Naive thymus-derived CD4-positive, alpha-beta T cell (primary cell): ENCODE measurements at regions of chr5 and their contacts with region 1.

Region 1: GRCh38 chr5:32174011-32174870 is at the start of gene GOLPH3:
- DNase-seq: peak; percentile 87 to 96 (median 92)
- ATAC-seq: peak; percentile 94
- H3K4me3 ChIP-seq: peak within 1 kb of the TSS; percentile 87
- H3K4me3 Mint-ChIP-seq: peak within 1 kb of the TSS; percentile 85 to 100 (median 98)
- H3K27ac ChIP-seq: peak within 1 kb of the TSS; percentile 100
- H3K27ac Mint-ChIP-seq: peak within 1 kb of the TSS; percentile 94 to 99 (median 99)
- H3K4me1 ChIP-seq: peaks cover 5 to 8% of the 10 kb centered on the region in 2 donors
- H3K4me1 Mint-ChIP-seq: peaks cover 21 to 46% (median 34%) of the 10 kb centered on the region in 7 donors
- H3K27me3 ChIP-seq: no peaks in the 10 kb centered on the region
- H3K27me3 Mint-ChIP-seq: peaks cover 0 to 6% (median 3%) of the 10 kb centered on the region in 5 donors
- total RNA-seq, gene GOLPH3: 46.9 to 66.5 (median 60.1) TPM

Region 2: DNA sequence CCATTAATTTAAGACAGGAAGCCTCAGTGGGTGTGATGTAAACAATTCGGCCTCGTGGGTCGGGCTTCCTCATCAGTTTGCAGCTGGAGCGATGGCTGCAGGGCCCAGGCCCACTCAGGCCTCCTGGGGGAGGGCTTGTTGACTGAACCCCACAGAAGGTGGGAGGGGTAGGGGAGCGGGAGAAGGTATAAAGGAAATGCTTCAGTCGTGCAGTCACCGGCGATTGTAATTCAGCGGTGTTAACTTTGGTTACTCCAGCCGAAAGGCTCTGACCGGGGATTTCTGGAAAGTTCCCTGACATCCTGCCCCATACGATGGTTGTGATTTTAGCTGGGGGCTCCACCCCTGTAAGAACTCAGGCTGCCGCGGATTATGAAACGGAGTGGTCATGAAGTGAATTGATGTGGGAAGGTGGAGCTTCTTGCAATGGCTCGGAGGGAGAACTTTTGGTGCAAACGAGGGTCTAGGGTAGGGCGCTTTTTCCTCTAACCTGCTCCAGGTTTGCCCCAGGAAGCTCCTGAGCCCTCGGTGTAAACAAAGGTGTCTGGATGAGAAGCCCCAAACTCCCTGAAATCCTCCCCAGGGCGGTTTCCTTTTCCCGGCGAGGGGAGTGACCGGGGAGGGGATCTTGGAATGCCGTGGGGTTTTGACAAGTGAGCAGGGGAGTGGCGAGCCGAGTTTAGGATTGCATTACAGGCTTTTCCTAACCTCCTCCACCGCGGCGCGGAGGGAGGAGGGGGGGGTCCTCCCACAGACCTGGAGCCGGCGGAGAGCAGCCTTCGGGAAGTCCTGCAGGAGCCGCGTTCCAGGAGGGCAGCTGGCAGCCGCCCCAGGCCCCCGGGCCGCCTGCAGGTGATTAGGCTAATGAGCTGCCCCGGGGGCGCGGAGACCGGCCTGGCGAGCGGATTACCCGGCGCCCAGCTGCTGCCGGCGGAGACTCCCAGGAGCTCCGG is 319.8 kb before region 1 on chr5:
- CTCF ChIA-PET with region 1: no interaction called
- POLR2A ChIA-PET with region 1: no interaction called
- intact Hi-C with region 1: loop called in 1 of 2 experiments (anchors 10 kb)
- DNase-seq: peak in 4 of 9 donors; percentile 10 to 26 (median 24)
- ATAC-seq: peak; percentile 43
- H3K4me3 ChIP-seq: peak overlapping the region; percentile 63
- H3K4me3 Mint-ChIP-seq: peak overlapping the region; percentile 76 to 97 (median 88)
- H3K27ac ChIP-seq: peak overlapping the region; percentile 66
- H3K27ac Mint-ChIP-seq: peak overlapping the region in 8 of 9 donors; percentile 81 to 93 (median 85)
- H3K4me1 ChIP-seq: no peaks in the 10 kb centered on the region
- H3K4me1 Mint-ChIP-seq: peaks cover 9 to 44% (median 28%) of the 10 kb centered on the region in 7 donors
- H3K27me3 ChIP-seq: no peaks in the 10 kb centered on the region
- H3K27me3 Mint-ChIP-seq: peaks cover 0 to 45% (median 22%) of the 10 kb centered on the region in 5 donors

Region 3: DNA sequence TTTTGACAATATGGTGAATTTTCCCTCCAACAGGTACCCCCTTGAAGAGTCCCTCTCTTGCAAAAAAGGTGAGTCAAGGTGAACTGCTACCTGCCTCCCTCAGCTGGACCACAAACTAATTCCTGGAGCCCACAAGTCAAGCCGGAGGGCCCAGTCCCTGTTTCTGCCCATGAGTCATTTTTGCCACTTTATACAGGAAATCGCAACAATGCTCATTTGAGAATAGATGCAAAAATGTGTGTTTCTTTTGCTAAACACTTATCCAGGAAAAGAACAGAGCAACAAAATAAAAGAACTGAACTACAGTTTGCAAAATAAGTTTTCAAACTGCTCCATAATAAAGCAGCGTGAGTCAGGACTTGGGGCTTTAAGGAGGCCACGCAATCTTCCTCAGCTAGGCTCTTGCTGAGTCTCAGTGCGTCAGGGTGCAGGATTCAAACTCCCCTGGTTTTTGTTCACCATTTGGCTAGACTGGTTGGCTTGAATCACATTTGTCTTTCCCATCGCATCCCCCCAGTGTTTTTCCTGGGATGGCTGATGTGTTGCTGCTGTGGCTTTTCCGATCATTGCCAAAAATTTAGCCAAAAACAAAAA is 102.8 kb before region 1 on chr5:
- CTCF ChIA-PET with region 1: no interaction called
- POLR2A ChIA-PET with region 1: no interaction called
- intact Hi-C with region 1: no loop called
- DNase-seq: no peak
- ATAC-seq: no peak
- H3K4me3 ChIP-seq: no peak overlapping the region
- H3K4me3 Mint-ChIP-seq: no peak overlapping the region
- H3K27ac ChIP-seq: no peak overlapping the region
- H3K27ac Mint-ChIP-seq: peak overlapping the region in 1 of 9 donors; percentile 20
- H3K4me1 ChIP-seq: no peaks in the 10 kb centered on the region
- H3K4me1 Mint-ChIP-seq: peaks cover 0 to under 1% (median 0%) of the 10 kb centered on the region in 7 donors
- H3K27me3 ChIP-seq: no peaks in the 10 kb centered on the region
- H3K27me3 Mint-ChIP-seq: no peaks in the 10 kb centered on the region

Region 4: DNA sequence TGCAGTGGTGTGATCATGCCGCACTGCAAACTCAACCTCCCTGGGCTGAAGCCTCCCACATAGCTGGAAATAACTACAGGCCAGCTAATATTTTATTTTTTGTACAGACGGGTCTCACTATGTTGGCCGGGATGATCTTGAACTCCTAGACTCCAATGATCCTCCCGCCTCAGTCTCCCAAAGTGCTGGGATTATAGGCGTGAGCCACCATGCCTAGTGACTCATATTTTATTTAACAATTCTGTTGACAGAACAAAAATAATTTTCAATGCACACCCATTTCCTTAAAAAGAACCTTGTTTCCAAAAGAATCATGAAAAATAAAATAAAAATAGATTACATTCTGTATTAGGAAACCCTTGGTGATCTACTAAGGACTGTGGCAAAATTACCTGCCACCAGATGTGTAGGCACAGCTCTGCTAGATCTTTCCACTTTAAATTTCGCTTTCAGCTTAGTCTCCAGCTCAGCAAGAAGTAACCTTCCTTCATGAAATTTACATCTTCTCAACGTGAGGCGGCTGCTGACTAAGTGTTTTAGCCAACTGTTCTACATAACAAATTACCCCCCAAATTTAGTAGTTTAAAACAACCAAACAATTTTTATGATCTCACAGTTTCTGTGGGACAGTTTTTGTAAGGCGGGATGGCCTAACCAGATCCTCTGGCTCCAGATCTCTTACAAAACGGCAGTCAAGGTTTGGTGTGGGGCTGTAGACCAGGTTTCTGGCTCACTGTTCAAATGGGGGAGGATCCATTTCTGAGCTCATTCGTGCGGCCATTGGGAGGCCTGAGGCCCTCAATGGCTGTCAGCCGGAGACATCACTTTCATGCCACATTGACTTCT is 32.5 kb after region 1 on chr5:
- CTCF ChIA-PET with region 1: no interaction called
- POLR2A ChIA-PET with region 1: no interaction called
- intact Hi-C with region 1: loop called (anchors 1 kb)
- DNase-seq: no peak
- ATAC-seq: no peak
- H3K4me3 ChIP-seq: no peak overlapping the region
- H3K4me3 Mint-ChIP-seq: no peak overlapping the region
- H3K27ac ChIP-seq: no peak overlapping the region
- H3K27ac Mint-ChIP-seq: peak overlapping the region in 1 of 9 donors; percentile 8
- H3K4me1 ChIP-seq: peaks cover 0 to 4% of the 10 kb centered on the region in 2 donors
- H3K4me1 Mint-ChIP-seq: peaks cover 6 to 19% (median 8%) of the 10 kb centered on the region in 7 donors
- H3K27me3 ChIP-seq: no peaks in the 10 kb centered on the region
- H3K27me3 Mint-ChIP-seq: peaks cover 0 to 8% (median 0%) of the 10 kb centered on the region in 5 donors

Region 5: DNA sequence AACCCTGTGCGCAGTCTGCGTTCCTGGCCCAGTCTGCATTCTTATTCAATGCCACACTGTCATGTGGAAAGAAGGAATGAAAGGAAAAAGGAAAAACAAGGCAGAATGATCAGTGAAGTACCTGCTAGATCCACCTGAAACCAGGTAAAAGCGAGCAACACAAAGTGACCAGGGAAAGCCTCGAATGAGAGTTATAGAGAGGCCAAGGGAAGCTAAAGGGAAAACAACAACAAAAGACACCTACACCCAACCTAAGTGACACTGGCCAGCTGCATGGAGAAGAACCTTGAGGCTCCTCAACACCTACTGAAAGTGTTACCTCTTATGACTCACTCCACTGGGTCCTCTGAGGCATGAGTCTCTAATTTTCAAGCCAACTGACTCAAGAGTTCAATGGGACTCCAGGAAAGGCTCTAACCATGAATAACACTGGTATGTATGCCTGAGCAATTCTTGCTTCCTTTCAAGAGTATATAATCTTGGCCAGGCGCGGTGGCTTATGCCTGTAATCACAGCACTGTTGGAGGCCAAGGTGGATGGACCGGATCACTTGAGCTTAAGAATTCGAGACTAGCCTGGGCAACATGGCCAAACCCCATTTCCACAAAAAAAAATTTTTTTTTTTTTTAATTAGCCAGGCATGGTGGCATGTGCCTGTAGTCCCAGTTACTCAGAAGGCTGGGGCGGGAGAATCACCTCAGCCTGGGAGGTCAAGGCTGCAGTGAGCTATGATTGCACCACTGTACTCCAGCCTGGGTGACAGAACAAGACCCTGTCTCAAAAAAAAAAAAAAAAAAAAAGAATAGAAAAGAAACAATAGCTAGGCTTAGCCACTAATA is 109.5 kb after region 1 on chr5:
- CTCF ChIA-PET with region 1: no interaction called
- POLR2A ChIA-PET with region 1: no interaction called
- intact Hi-C with region 1: loop called in 1 of 2 experiments (anchors 2 kb)
- DNase-seq: no peak
- ATAC-seq: peak; percentile 68
- H3K4me3 ChIP-seq: no peak overlapping the region
- H3K4me3 Mint-ChIP-seq: no peak overlapping the region
- H3K27ac ChIP-seq: no peak overlapping the region
- H3K27ac Mint-ChIP-seq: peak overlapping the region in 5 of 9 donors; percentile 7 to 55 (median 14)
- H3K4me1 ChIP-seq: peaks cover 0 to 12% of the 10 kb centered on the region in 2 donors
- H3K4me1 Mint-ChIP-seq: peaks cover 10 to 67% (median 63%) of the 10 kb centered on the region in 7 donors
- H3K27me3 ChIP-seq: no peaks in the 10 kb centered on the region
- H3K27me3 Mint-ChIP-seq: no peaks in the 10 kb centered on the region

Region 6: DNA sequence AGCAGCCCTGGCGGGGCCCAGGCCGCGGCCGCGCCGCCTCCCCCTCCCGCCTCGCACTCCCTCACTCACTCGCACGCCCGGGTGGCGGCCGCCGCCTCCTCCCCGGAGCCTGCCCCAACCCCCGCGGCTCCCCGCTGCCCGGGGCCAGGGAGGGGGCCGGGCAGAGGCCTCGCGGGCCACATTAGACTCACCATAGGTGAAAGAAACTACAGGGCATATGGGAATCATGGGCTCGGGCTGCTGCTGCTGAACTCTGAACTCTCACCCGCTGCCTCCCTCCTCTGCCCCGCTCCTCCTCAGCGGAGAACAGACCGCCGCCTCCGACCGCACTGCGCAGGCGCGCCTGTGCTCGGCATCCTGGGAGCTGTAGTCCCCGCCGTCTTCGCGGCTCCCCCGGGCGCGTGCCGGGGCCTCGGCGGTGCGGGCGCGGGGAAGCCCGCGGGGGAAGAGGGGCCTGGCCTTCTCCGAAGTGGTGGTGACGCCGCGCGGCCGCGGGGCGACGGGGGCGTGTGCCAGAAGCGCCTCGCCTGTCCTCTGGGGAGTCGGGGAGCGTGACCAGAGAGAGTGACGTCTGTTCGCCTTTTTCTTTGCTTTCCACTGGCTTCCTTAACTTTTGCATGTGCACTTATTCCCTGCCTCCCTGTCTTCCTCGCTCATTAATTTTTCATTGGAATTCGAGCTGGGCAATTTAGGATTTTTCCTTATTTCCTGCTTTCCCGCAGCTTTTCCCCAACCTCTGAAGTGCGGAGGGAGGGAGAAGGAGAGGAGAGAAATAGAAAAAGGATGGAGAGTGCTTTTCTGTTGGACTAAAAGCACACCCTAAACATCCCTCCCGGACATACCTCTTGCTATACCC is 270.4 kb after region 1 on chr5 and contains the start of gene ZFR:
- CTCF ChIA-PET with region 1: no interaction called
- POLR2A ChIA-PET with region 1: no interaction called
- intact Hi-C with region 1: loop called (anchors 1 to 2 kb)
- DNase-seq: peak; percentile 91 to 95 (median 93)
- ATAC-seq: peak; percentile 95
- H3K4me3 ChIP-seq: peak within 1 kb of the TSS; percentile 67
- H3K4me3 Mint-ChIP-seq: peak within 1 kb of the TSS; percentile 79 to 94 (median 92)
- H3K27ac ChIP-seq: peak within 1 kb of the TSS; percentile 93
- H3K27ac Mint-ChIP-seq: peak within 1 kb of the TSS; percentile 75 to 96 (median 93)
- H3K4me1 ChIP-seq: peaks cover 16 to 20% of the 10 kb centered on the region in 2 donors
- H3K4me1 Mint-ChIP-seq: peaks cover 24 to 38% (median 33%) of the 10 kb centered on the region in 7 donors
- H3K27me3 ChIP-seq: no peaks in the 10 kb centered on the region
- H3K27me3 Mint-ChIP-seq: peaks cover 0 to 17% (median 0%) of the 10 kb centered on the region in 5 donors
- total RNA-seq, gene ZFR: 53.4 to 59.3 (median 58.0) TPM

Region 7: DNA sequence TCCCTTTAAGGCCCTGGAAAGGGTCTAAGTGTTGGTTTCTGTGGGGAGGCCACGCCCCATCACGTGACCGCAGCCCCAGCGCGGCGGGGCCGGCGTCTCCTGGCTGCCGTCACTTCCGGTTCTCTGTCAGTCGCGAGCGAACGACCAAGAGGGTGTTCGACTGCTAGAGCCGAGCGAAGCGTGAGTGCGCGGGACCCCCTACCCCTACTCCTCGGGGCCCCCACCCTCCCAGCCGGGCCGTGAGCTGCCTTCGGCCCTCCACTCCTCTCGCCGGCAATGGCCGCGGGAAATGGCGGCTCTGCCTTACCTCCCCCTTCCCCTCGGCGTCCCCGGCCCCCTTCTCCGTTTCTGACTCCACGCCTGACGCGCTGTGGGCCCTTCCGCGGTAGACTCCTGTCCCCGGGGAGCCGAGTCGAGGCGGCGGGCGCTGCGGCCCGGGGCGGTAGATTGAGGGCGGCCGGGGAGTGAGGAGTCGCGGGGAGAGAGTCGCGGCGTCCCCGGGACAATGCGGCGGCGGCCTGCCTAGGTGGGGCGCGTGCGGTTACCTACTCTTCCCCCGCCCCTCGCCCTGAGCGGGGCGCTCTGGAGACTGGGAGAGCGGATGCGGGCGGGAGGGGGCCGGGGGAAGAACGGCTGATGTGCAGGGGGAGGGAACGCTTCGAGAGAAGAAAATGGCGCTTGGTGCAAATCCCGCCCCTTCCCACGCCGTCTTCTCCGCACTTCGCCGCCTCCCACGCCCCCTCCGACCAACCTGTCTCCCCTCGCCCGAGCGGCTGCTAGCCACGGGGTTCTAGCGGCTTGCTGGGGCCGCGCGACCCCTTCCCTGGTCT is 411.4 kb after region 1 on chr5 and contains the start of gene SUB1:
- CTCF ChIA-PET with region 1: no interaction called
- POLR2A ChIA-PET with region 1: interaction called, 11 read pairs
- intact Hi-C with region 1: loop called (anchors 1 kb)
- DNase-seq: peak; percentile 90 to 94 (median 93)
- ATAC-seq: peak; percentile 93
- H3K4me3 ChIP-seq: peak within 1 kb of the TSS; percentile 94
- H3K4me3 Mint-ChIP-seq: peak within 1 kb of the TSS; percentile 92 to 100 (median 98)
- H3K27ac ChIP-seq: peak within 1 kb of the TSS; percentile 100
- H3K27ac Mint-ChIP-seq: peak within 1 kb of the TSS; percentile 87 to 99 (median 98)
- H3K4me1 ChIP-seq: peaks cover 24 to 36% of the 10 kb centered on the region in 2 donors
- H3K4me1 Mint-ChIP-seq: peaks cover 42 to 72% (median 67%) of the 10 kb centered on the region in 7 donors
- H3K27me3 ChIP-seq: no peaks in the 10 kb centered on the region
- H3K27me3 Mint-ChIP-seq: peaks cover 0 to 2% (median 0%) of the 10 kb centered on the region in 5 donors
- total RNA-seq, gene SUB1: 187 to 388 (median 285) TPM

Region 8: GRCh38 chr5:34007621-34008600 is 1833.7 kb after region 1 on chr5 and contains the start of gene AMACR:
- CTCF ChIA-PET with region 1: no interaction called
- POLR2A ChIA-PET with region 1: no interaction called
- intact Hi-C with region 1: loop called in 1 of 2 experiments (anchors 10 kb)
- DNase-seq: peak; percentile 73 to 91 (median 81)
- ATAC-seq: peak; percentile 95
- H3K4me3 ChIP-seq: peak within 1 kb of the TSS; percentile 85
- H3K4me3 Mint-ChIP-seq: peak within 1 kb of the TSS; percentile 79 to 98 (median 94)
- H3K27ac ChIP-seq: peak within 1 kb of the TSS; percentile 83
- H3K27ac Mint-ChIP-seq: peak within 1 kb of the TSS; percentile 87 to 97 (median 96)
- H3K4me1 ChIP-seq: peaks cover 9 to 18% of the 10 kb centered on the region in 2 donors
- H3K4me1 Mint-ChIP-seq: peaks cover 23 to 39% (median 32%) of the 10 kb centered on the region in 7 donors
- H3K27me3 ChIP-seq: no peaks in the 10 kb centered on the region
- H3K27me3 Mint-ChIP-seq: no peaks in the 10 kb centered on the region
- total RNA-seq, gene AMACR: 2.7 to 8.3 (median 7.3) TPM